ENCODE measurements at regions of chr22 and their contacts with region 1.

Region 1: DNA sequence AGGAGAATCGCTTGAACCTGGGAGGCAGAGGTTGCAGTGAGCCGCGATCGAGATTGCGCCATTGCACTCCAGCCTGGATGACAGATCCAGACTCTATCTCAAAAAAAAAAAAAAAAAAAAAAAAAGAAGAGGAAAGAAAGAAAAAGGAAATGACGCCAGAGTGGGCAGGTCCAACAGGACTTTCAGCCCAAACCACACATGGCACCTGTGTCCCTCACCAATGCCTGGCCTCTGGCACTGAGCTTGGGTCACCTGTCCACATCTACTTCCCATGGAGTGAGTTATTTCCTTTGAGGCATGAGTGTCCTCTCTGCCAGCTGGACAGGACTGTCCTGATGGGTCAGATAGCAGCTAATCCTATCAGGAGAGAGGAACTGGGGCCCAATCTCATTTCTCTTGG is 15.2 kb upstream of the GCAT start:
- DNase-seq: no peak
- H3K4me3 ChIP-seq: no peak overlapping the region
- H3K27ac ChIP-seq: no peak overlapping the region
- H3K4me1 ChIP-seq: no peaks in the 10 kb centered on the region
- H3K27me3 ChIP-seq: no peaks in the 10 kb centered on the region
- CTCF ChIP-seq: no peak
- POLR2A ChIP-seq: no peak

Region 2: DNA sequence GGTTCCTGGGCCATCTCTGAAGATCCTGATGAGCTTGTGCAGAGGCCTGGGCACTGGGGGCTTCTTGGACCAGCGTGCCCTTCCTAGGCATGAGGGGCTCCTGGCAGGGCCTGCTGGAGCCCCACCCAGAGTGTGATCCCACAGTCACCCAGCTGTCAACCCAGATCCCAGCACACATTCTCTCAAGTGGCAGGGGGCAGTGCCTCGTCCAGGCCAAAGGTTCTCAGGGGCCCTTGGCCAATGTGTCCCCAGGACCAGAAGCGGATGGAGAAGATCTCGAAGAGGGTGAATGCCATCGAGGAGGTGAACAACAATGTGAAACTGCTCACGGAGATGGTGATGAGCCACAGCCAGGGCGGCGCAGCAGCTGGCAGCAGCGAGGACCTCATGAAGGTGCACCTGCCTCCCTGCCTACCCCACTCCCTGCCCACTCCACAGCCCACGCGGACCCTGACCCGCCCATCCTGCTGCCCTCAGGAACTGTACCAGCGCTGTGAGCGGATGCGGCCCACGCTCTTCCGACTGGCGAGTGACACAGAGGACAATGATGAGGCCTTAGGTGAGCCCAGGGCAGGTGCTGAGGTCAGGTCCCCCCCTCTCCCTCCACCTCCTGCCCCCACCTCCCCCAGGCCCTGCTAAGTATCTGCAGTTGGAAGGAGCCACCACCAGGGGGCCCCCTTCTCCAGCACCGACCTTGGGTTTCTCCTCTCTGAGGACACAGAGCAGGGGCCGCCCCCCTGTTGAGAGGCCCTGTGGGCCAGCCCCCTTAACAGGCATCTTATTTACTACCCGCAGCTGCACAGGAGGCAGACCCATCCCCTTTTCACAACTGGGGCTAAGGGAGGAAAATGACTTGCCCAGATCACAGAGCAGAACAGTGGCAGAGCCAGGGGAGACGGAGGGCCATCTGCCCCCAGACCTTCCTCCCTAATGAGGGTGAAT is 169.1 kb before region 1 on chr22:
- CTCF ChIA-PET with region 1: interaction called, 3 read pairs
- POLR2A ChIA-PET with region 1: no interaction called
- dilution Hi-C with region 1: no loop called
- intact Hi-C with region 1: loop called (anchors 1 kb)
- DNase-seq: peak; percentile 44
- H3K4me3 ChIP-seq: no peak overlapping the region
- H3K27ac ChIP-seq: no peak overlapping the region
- H3K4me1 ChIP-seq: peaks cover 7% of the 10 kb centered on the region
- H3K27me3 ChIP-seq: no peaks in the 10 kb centered on the region
- CTCF ChIP-seq: peak; percentile 51 to 87
- POLR2A ChIP-seq: no peak

Region 3: GRCh38 chr22:37781479-37781911 is 11.0 kb before region 1 on chr22:
- CTCF ChIA-PET with region 1: interaction called, 11 read pairs
- POLR2A ChIA-PET with region 1: interaction called, 3 read pairs
- dilution Hi-C with region 1: no loop called
- intact Hi-C with region 1: no loop called
- DNase-seq: no peak
- H3K4me3 ChIP-seq: no peak overlapping the region
- H3K27ac ChIP-seq: no peak overlapping the region
- H3K4me1 ChIP-seq: peaks cover 15% of the 10 kb centered on the region
- H3K27me3 ChIP-seq: no peaks in the 10 kb centered on the region
- CTCF ChIP-seq: peak; percentile 21 to 41
- POLR2A ChIP-seq: no peak

Region 4: DNA sequence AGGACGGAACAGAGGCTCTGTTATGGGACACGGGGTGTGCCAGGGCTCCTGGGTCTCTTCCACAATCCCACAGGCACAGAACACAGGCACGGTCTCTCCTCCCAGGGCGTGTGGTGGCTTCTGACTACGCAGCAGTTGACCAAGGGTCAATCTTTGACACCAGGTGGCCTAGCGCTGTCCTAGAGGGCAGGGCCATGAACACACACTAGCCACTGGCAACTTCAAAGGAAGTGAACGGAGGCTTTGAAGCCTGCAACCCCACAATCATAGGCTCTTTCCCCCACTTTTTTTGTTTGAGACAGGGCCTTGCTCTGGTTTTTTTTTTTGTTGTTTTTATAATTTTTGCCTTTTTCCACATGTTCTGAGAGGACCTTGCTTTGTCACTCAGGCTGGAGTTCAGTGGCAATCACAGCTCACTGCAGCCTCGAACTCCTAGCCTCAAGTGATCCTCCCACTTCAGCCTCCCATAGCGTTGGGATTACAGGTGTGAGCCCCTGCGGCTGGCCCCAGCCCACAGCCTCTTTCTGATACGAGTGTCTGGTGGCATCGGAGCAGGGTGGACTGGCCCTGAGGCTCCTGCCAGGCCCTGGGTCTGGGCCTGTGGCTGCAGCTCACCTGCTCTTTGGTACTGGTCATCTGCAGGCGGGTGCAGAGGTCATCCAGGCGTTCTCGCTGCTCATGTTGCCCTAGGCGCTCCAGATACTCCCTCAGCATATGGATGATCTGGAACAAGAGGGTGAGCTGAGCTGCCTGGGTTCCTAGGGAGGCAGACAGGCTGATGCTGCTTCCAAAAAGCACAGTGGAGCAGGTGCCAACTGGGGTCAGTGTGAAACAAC is 39.7 kb after region 1 on chr22:
- CTCF ChIA-PET with region 1: no interaction called
- POLR2A ChIA-PET with region 1: no interaction called
- dilution Hi-C with region 1: no loop called
- intact Hi-C with region 1: no loop called
- DNase-seq: no peak
- H3K4me3 ChIP-seq: no peak overlapping the region
- H3K27ac ChIP-seq: no peak overlapping the region
- H3K4me1 ChIP-seq: no peaks in the 10 kb centered on the region
- H3K27me3 ChIP-seq: no peaks in the 10 kb centered on the region
- CTCF ChIP-seq: no peak
- POLR2A ChIP-seq: no peak

Measured in endothelial cell of umbilical vein (primary cell).